Aorta (tissue), 5 donors: ENCODE measurements at regions of chr5 and their contacts with region 1.

Region 1: DNA sequence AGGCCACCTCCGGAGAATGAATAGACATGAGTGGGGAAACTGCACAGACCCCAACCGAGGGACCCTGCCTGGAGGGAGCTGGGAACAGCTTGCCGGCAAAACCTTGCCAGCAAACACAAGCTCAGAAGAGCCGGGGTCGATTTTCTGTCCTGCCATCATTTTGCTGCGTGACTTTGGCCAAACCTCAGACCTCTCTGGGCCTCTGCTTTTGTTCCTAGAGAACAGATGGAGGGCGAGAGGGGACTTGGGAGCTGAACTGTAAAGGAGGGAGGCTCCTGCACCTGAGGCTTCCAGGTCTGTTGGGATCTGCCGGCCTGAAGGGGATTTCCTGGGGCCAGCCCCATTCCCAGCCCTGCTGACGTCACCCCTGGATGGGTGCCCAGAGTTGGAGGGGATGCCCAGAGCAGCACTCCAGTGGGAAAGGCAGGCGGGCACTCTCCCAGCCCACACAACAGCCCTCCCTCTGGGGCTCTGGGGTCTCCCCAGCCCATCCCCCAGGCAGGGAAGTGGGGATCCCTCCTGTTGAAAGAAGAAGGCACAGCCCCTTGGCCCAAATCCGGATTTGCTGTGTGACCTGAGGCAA is 40.5 kb upstream of the SYNPO start:
- DNase-seq: peak; percentile 94 to 98
- ATAC-seq: peak; percentile 71
- H3K4me3 ChIP-seq: no peak overlapping the region
- H3K27ac ChIP-seq: peak overlapping the region; percentile 84 to 95
- H3K4me1 ChIP-seq: peaks cover 0 to 4% of the 10 kb centered on the region in 2 donors
- H3K27me3 ChIP-seq: no peaks in the 10 kb centered on the region

Region 2: GRCh38 chr5:150624334-150625163 is 24.5 kb after region 1 on chr5:
- intact Hi-C with region 1: loop called in 1 of 2 experiments (anchors 2 kb)
- DNase-seq: no peak
- ATAC-seq: peak; percentile 9
- H3K4me3 ChIP-seq: peak overlapping the region; percentile 83 to 90
- H3K27ac ChIP-seq: peak overlapping the region; percentile 80 to 99
- H3K4me1 ChIP-seq: no peaks in the 10 kb centered on the region
- H3K27me3 ChIP-seq: no peaks in the 10 kb centered on the region

Region 3: DNA sequence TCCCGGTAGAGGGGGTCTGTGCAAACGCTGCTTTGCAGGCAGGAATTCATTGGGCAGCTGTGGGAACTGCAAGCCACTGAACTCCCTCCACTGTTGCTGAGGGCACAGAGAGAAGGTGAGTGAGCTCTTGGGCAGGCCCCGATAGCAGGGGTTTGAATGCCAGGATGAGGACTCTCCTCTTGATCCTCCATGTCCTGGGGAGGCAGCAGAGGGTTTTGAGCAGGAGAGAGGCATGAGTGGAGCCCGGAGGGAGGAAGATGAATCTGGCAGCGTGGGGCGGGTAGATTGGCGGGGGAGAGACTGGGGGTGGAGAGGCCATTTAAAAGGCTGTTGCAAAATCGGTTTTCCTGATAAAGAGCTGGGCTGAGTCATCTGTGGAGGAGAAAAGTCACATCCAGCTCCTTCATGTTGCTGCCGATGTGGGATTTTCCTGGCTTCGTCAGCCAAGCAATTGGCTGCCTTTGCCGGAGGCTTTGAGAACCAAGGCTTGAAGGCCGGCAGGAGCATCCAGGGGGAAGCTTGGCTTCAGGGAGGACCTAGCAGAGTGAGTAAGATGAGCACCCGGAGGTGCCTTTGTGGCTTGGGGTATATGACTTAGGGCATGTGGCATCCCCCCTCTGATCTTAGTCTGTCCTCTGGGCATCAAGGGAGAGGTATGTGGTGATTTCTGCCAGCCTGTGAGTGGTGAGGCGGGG is 40.5 kb after region 1 on chr5 and contains the start of gene SYNPO:
- intact Hi-C with region 1: loop called (anchors 2 to 5 kb)
- DNase-seq: peak; percentile 85 to 91
- ATAC-seq: peak; percentile 81
- H3K4me3 ChIP-seq: no peak within 1 kb of the TSS
- H3K27ac ChIP-seq: peak within 1 kb of the TSS; percentile 89 to 93
- H3K4me1 ChIP-seq: peaks cover 2 to 6% of the 10 kb centered on the region in 2 donors
- H3K27me3 ChIP-seq: no peaks in the 10 kb centered on the region
- total RNA-seq, gene SYNPO: 327 to 478 TPM

Region 4: DNA sequence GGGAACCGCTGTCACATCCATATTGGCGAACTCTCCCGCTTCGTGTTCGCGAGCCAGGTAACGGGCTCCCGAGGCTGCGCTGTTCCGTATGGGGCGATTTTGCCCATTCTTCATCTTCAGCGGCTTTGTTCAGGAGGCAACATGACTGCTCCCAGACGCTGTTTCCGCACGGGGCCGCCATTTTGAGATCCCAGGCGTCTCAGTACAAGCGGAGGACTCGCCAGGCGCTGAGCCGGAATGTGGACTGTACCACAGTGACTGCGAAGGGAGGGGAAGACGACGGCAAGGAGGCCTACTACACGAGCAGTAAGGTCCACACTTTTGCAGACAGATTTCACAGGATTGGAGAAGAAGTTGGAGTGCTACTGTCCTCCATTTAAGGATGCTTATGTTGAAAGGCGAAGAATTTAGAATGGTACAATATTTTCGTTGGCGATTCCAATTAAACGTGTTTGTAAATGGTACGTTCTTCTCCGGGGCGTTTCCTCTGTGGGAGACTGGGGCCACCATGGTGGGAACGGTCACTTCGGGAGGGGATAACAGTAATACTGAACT is 346.4 kb after region 1 on chr5:
- intact Hi-C with region 1: no loop called
- DNase-seq: peak; percentile 90 to 94
- ATAC-seq: peak; percentile 95
- H3K4me3 ChIP-seq: peak overlapping the region; percentile 36 to 72
- H3K27ac ChIP-seq: peak overlapping the region; percentile 59 to 60
- H3K4me1 ChIP-seq: no peaks in the 10 kb centered on the region
- H3K27me3 ChIP-seq: no peaks in the 10 kb centered on the region